ENCODE measurements at regions of chr9 and their contacts with region 1.

Region 1: GRCh38 chr9:89602978-89603766 is 1.6 kb upstream of the GADD45G start:
- DNase-seq: peak; percentile 97
- H3K4me3 ChIP-seq: peak overlapping the region; percentile 69 to 86 (median 76)
- H3K27ac ChIP-seq: peak overlapping the region; percentile 89 to 93 (median 91)
- H3K4me1 ChIP-seq: peaks cover 27 to 47% (median 45%) of the 10 kb centered on the region in 4 donors
- H3K27me3 ChIP-seq: peaks cover 0 to 5% (median 0%) of the 10 kb centered on the region in 4 donors
- CTCF ChIP-seq: peak; percentile 85 to 90 (median 87)
- EP300 ChIP-seq: no peak
- POLR2A ChIP-seq: no peak

Region 2: GRCh38 chr9:88973281-88974152 is 629.7 kb before region 1 on chr9:
- intact Hi-C with region 1: no loop called
- DNase-seq: no peak
- H3K4me3 ChIP-seq: no peak overlapping the region
- H3K27ac ChIP-seq: no peak overlapping the region
- H3K4me1 ChIP-seq: peaks cover 5 to 30% (median 18%) of the 10 kb centered on the region in 4 donors
- H3K27me3 ChIP-seq: no peaks in the 10 kb centered on the region
- CTCF ChIP-seq: no peak
- EP300 ChIP-seq: no peak
- POLR2A ChIP-seq: no peak

Region 3: GRCh38 chr9:89879701-89880100 is 276.5 kb after region 1 on chr9:
- intact Hi-C with region 1: loop called (anchors 10 kb)
- DNase-seq: peak; percentile 93
- H3K4me3 ChIP-seq: no peak overlapping the region
- H3K27ac ChIP-seq: peak overlapping the region in 1 of 4 donors; percentile 20
- H3K4me1 ChIP-seq: peaks cover 40 to 52% (median 46%) of the 10 kb centered on the region in 4 donors
- H3K27me3 ChIP-seq: no peaks in the 10 kb centered on the region
- CTCF ChIP-seq: no peak
- EP300 ChIP-seq: no peak
- POLR2A ChIP-seq: no peak

Region 4: DNA sequence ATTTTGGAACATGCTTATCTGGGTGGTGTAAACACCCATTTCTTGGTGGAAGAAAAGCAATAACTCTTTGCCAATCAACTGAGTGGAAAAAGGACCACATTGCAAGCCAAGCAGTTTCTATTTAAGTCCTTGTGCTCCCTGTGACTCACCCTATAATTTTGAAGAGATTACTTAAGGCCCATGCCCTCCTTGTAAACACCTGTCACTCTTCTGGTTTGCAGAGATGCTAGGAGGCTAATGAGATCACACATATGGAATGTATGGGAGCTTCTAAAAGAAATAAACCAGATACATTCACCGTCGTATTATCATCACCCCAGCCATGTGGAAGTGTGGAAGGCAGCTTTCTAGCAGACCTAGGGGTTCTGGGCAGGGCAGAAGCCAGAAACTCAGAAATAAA is 338.7 kb after region 1 on chr9:
- intact Hi-C with region 1: loop called (anchors 10 kb)
- DNase-seq: no peak
- H3K4me3 ChIP-seq: no peak overlapping the region
- H3K27ac ChIP-seq: peak overlapping the region; percentile 54 to 79 (median 67)
- H3K4me1 ChIP-seq: peaks cover 12 to 54% (median 51%) of the 10 kb centered on the region in 4 donors
- H3K27me3 ChIP-seq: no peaks in the 10 kb centered on the region
- CTCF ChIP-seq: no peak
- EP300 ChIP-seq: peak; percentile 36
- POLR2A ChIP-seq: no peak

Region 5: GRCh38 chr9:89999534-90000370 is 396.6 kb after region 1 on chr9:
- intact Hi-C with region 1: loop called (anchors 5 kb)
- DNase-seq: no peak
- H3K4me3 ChIP-seq: peak overlapping the region; percentile 31 to 36 (median 34)
- H3K27ac ChIP-seq: peak overlapping the region; percentile 76 to 88 (median 86)
- H3K4me1 ChIP-seq: peaks cover 49 to 68% (median 65%) of the 10 kb centered on the region in 4 donors
- H3K27me3 ChIP-seq: no peaks in the 10 kb centered on the region
- CTCF ChIP-seq: no peak
- EP300 ChIP-seq: peak; percentile 28
- POLR2A ChIP-seq: no peak

Region 6: GRCh38 chr9:90102292-90102901 is 499.2 kb after region 1 on chr9:
- intact Hi-C with region 1: loop called (anchors 1 kb)
- DNase-seq: no peak
- H3K4me3 ChIP-seq: no peak overlapping the region
- H3K27ac ChIP-seq: no peak overlapping the region
- H3K4me1 ChIP-seq: peaks cover 18 to 27% (median 21%) of the 10 kb centered on the region in 4 donors
- H3K27me3 ChIP-seq: no peaks in the 10 kb centered on the region
- CTCF ChIP-seq: peak; percentile 77 to 93 (median 88)
- EP300 ChIP-seq: no peak
- POLR2A ChIP-seq: no peak

Region 7: DNA sequence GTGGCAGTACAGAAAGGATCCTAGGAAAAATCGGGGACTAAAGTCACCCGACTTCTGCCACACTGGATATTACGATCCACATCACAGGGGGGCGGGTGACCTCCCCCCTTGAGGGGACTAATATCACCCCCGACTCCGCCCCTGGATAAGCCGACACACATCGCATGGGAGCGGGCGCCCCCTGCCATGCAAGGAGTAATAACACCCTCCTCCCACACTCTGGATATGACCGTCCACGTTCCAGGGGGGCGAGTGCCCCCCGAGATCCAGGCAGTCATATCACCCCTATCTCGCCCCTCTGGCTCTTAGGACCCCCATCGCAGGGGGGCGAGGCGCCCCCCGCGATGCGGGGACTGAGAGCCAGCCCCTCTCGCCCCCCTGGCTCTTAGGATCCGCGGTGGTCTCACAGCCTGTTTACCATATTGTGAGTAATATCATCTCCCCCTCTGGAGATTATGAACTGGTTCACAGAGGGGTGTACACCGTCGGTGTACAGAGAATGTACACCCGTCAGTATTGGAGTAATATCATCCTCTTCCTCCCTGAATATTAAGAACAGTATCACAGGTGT is 616.5 kb after region 1 on chr9:
- intact Hi-C with region 1: loop called (anchors 10 kb)
- DNase-seq: no peak
- H3K4me3 ChIP-seq: no peak overlapping the region
- H3K27ac ChIP-seq: no peak overlapping the region
- H3K4me1 ChIP-seq: no peaks in the 10 kb centered on the region
- H3K27me3 ChIP-seq: peaks cover 0 to 27% (median 9%) of the 10 kb centered on the region in 4 donors
- CTCF ChIP-seq: peak; percentile 14 to 40 (median 22)
- EP300 ChIP-seq: no peak
- POLR2A ChIP-seq: no peak

Measured in esophagus muscularis mucosa (tissue), 4 donors.